ENCODE measurements at regions of chr10 and their contacts with region 1.

Region 1: DNA sequence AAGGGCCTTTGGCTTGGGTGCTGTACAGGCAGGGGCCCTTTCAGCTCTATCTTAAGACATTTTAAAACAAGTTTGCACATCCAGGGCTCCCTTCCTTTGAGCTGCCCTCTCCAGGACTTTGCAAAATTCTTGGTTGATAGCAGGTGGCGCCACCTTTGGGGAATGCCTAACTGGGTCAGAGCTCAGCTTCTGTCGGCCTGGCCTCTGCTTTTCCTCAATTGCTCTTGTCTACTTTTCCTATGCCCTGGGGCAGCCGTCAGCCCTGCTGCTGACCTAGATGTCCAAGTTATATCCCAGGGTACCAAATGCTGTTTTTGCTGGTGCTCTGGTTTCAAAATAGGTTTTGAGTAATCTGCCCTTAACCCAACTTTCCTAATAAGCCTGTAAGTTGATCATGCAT is 65.8 kb downstream of the APBB1IP start:
- DNase-seq: peak in 1 of 2 experiments; percentile 55
- H3K4me3 ChIP-seq: no peak overlapping the region
- H3K27ac ChIP-seq: no peak overlapping the region
- H3K4me1 ChIP-seq: no peaks in the 10 kb centered on the region
- H3K27me3 ChIP-seq: no peaks in the 10 kb centered on the region
- CTCF ChIP-seq: peak; percentile 57 to 63 (median 60)
- EP300 ChIP-seq: no peak
- POLR2A ChIP-seq: no peak
- RAD21 ChIP-seq: peak; percentile 35 to 49

Region 2: DNA sequence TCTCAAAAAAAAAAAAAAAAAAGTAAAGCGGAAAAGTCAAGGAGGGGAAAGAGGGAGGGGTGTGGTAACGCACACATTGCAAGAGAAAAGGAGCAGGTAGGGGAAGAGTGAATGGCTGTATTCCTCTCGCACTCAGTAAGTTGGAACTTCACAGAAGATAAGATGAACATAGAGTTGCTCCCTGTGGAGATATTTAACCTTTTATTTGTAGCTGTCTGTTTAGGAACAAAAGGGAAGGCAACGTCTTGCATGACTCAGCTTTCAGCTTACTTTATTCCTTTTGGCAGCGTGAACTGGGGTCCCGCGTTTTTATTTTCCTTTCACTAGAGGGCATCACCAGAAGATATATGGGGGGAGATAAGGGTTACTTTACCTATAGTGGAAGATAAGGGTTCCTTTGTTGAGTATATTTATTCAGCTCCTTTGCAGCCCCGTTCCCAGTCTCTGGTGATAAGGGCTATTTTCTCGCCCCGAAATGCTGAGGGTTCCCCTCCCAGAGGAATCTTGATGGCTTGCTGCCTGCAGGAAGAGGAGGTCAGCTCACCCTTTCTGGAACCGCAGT is 12.7 kb after region 1 on chr10:
- CTCF ChIA-PET with region 1: interaction called, 18 read pairs
- POLR2A ChIA-PET with region 1: no interaction called
- DNase-seq: peak in 1 of 2 experiments; percentile 50
- H3K4me3 ChIP-seq: peak overlapping the region in 1 of 4 experiments; percentile 29; a peak in 1 of 8 replicates
- H3K27ac ChIP-seq: no peak overlapping the region
- H3K4me1 ChIP-seq: peaks cover 4 to 10% (median 7%) of the 10 kb centered on the region in 4 experiments; a peak in 5 of 7 replicates
- H3K27me3 ChIP-seq: no peaks in the 10 kb centered on the region
- CTCF ChIP-seq: no peak
- EP300 ChIP-seq: no peak
- POLR2A ChIP-seq: no peak
- RAD21 ChIP-seq: no peak